Colonic mucosa (tissue), 4 donors: ENCODE measurements at regions of chr15 and their contacts with region 1.

Region 1: DNA sequence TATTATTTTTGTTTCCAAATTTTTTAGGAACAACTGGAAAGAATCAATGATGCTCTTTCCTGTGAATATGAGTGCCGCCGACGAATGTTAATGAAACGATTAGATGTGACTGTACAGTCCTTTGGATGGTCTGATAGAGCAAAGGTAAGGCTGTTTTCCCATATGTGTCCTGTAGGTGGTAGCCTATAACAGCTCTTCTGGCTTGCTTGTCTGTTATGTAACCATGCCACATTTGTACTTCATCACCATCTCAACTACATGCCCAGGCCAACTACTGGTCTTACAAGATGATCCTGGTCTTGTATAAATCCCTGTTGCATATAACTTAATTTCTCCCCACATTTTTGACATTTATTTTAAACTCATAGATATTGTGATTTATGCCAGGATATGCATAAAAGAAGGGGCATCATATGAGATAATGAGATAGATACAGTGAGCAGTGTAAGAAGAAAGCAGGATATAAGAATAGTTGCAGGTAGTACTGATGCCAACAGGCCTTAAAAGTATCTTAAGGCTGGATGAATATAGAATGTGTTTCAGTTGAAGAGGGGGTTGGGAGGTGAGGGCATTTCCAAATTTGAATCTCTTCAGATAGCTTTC is 20.3 kb downstream of the FAM98B start:
- DNase-seq: peak; percentile 40
- H3K4me3 ChIP-seq: no peak overlapping the region
- H3K27ac ChIP-seq: no peak overlapping the region
- H3K4me1 ChIP-seq: no peaks in the 10 kb centered on the region
- H3K27me3 ChIP-seq: no peaks in the 10 kb centered on the region
- CTCF ChIP-seq: peak; percentile 60

Region 2: DNA sequence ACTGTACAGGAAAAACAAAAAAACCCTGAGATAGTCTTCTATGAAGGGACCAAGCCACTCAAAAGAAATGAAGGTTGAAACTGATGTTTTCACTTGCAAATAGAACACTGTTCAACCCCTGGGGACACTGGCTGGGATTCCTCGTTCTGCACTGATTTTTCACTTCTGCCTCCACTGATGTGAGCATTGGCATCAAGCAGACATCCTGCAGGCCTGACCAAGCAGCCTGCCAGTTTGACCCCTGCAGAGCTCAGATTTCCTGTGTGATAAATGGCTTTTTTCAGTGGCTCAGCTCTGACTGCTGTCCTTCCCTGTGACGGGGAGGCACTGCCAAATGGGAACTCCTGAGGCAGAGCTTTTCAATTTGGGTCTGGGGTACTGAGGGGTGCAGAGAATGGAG is 40.3 kb after region 1 on chr15:
- intact Hi-C with region 1: no loop called
- DNase-seq: no peak
- H3K4me3 ChIP-seq: no peak overlapping the region
- H3K27ac ChIP-seq: no peak overlapping the region
- H3K4me1 ChIP-seq: no peaks in the 10 kb centered on the region
- H3K27me3 ChIP-seq: no peaks in the 10 kb centered on the region
- CTCF ChIP-seq: no peak

Region 3: GRCh38 chr15:38683382-38684242 is 209.4 kb after region 1 on chr15:
- intact Hi-C with region 1: loop called (anchors 10 kb)
- DNase-seq: peak; percentile 65
- H3K4me3 ChIP-seq: no peak overlapping the region
- H3K27ac ChIP-seq: no peak overlapping the region
- H3K4me1 ChIP-seq: no peaks in the 10 kb centered on the region
- H3K27me3 ChIP-seq: no peaks in the 10 kb centered on the region
- CTCF ChIP-seq: peak; percentile 70